PC-9 (cell line): ENCODE measurements at regions of chr5 and their contacts with region 1.

Region 1: GRCh38 chr5:119411935-119412602 is 40.2 kb upstream of the HSD17B4 start:
- DNase-seq: peak; percentile 36 to 61
- H3K4me3 ChIP-seq: peak overlapping the region; percentile 59
- H3K27ac ChIP-seq: no peak overlapping the region
- H3K4me1 ChIP-seq: peaks cover 14% of the 10 kb centered on the region; the same call in 1 of the 2 replicates
- H3K27me3 ChIP-seq: no peaks in the 10 kb centered on the region
- CTCF ChIP-seq: peak; percentile 88

Region 2: DNA sequence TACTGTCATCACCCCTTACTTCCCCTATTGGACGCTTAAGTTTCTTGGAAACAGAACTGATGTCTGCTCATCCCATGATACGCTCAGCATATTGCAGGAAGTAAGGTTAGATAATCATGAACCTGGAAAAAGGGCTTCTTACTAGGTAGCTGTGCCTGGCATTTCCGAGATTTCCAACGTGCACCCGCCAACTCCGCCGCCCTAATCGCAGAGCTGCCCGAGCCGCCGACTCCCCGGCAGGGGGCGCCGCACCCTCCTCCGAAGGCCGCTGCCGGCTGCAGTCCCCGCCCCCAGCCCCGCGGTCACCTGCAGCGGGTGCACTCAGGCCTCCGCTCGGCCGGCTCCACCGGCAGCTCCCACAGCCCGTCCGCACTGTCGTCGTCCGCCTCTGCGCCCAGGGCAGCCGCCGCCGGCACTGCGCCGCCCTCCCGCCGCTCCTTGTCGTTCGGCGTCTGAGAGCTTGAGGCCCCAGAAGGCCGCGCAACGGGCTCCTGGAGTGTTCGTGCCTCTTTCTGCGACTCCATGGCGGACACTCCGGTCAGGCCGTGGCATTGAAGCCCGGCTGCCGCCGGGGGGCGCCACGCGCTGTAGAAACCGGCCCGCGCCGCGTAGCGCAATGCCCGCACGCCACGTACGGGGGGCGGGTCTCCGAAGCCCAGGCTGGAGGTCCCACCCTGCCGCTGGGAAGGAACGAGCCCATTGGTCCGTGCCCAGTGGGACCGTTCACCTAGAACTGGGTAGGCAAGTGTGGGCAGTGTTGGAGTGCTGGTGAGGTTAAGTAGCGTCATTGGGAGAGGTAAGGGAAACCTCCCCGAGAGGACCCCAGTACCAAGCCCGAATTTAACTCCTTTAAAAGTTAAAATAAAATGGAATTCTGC is 423.8 kb before region 1 on chr5 and contains the start of gene DTWD2:
- CTCF ChIA-PET with region 1: interaction called, 13 read pairs
- POLR2A ChIA-PET with region 1: interaction called, 29 read pairs
- intact Hi-C with region 1: loop called (anchors 1 kb)
- DNase-seq: peak; percentile 87 to 96
- H3K4me3 ChIP-seq: peak within 1 kb of the TSS; percentile 78
- H3K27ac ChIP-seq: peak within 1 kb of the TSS; percentile 68
- H3K4me1 ChIP-seq: peaks cover 27% of the 10 kb centered on the region
- H3K27me3 ChIP-seq: no peaks in the 10 kb centered on the region
- CTCF ChIP-seq: peak; percentile 90
- total RNA-seq, gene DTWD2: 3.3 and 4.9 TPM in 2 replicates

Region 3: DNA sequence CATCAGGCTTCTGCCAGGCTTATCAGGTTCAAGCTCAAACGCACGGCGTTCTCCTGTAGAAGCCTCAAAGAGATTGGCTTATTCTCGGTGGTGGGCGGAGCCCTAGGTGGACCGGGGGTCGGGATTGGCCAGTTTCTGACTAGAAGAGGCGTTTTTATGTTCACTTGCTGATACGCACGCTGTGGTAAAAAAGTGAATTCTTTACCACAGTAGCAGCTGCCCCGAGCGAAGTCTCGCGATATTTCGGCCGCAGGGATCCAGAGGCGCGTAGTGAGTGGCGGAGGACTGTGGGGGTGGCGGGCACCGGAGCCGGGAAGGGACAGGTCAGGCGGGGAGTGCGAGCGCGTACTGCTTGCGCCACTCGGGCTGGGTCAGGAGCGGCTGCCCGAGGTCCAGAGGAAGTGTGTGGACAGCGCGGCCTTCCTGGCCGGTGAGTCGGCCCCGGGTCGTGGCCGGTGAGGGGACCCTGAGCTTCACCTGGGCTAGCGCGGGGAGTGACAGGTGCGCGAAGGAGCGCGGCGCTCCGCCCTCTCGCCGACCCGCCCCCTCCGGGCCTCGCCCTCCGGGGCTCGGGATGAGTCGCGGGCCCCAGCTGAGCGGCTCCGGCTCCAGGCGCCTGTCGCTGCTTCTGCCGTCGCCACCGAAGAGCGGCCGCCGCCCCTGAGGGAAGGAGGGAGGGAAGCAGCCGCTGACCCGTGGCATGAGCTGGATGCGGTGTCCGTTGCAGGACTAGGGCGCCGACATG is 341.1 kb before region 1 on chr5 and contains the start of gene DMXL1:
- CTCF ChIA-PET with region 1: interaction called, 4 read pairs
- POLR2A ChIA-PET with region 1: no interaction called
- intact Hi-C with region 1: loop called (anchors 2 kb)
- DNase-seq: peak; percentile 97 to 98
- H3K4me3 ChIP-seq: peak within 1 kb of the TSS; percentile 95
- H3K27ac ChIP-seq: peak within 1 kb of the TSS; percentile 80
- H3K4me1 ChIP-seq: peaks cover 16% of the 10 kb centered on the region
- H3K27me3 ChIP-seq: no peaks in the 10 kb centered on the region
- CTCF ChIP-seq: no peak
- total RNA-seq, gene DMXL1: 19.7 and 27.3 TPM in 2 replicates

Region 4: GRCh38 chr5:119267958-119268386 is 144.1 kb before region 1 on chr5:
- CTCF ChIA-PET with region 1: no interaction called
- POLR2A ChIA-PET with region 1: no interaction called
- intact Hi-C with region 1: loop called (anchors 2 kb)
- DNase-seq: peak; percentile 76 to 79
- H3K4me3 ChIP-seq: peak overlapping the region; percentile 95
- H3K27ac ChIP-seq: no peak overlapping the region
- H3K4me1 ChIP-seq: peaks cover 18% of the 10 kb centered on the region
- H3K27me3 ChIP-seq: no peaks in the 10 kb centered on the region
- CTCF ChIP-seq: no peak; the same call in 1 of the 2 replicates

Region 5: DNA sequence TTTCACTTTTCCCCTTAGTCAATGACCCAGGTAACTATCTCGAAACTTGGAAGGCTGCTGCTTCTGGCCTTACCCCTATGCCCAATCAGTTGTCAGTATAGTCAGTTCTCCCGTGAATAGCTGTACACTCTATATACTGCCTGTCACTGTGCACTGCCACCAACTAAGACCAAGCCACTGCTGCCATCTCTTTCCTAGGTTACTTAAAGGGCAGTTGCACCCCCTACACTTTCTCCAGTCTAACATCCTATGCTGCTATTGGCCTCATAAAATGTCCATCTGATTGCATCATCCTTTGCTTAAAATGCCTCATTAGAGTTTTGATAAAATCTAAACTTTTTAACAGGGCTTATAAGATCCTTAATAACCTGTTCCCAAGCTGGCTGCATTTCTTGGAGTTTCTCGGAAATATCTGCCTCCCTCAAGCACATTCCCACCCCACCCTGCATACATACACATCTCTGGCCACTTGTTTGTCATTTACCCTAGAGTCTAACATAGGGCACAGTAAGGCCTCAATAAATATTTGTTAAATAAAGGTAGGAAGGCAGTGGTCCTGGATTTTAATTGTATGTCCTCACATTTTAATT is 89.0 kb before region 1 on chr5:
- CTCF ChIA-PET with region 1: interaction called, 9 read pairs
- POLR2A ChIA-PET with region 1: no interaction called
- intact Hi-C with region 1: loop called (anchors 5 kb)
- DNase-seq: no peak
- H3K4me3 ChIP-seq: no peak overlapping the region
- H3K27ac ChIP-seq: peak overlapping the region; percentile 89
- H3K4me1 ChIP-seq: peaks cover 52% of the 10 kb centered on the region
- H3K27me3 ChIP-seq: no peaks in the 10 kb centered on the region
- CTCF ChIP-seq: no peak